PC-9 (cell line): ENCODE measurements at regions of chr13 and their contacts with region 1.

Region 1: GRCh38 chr13:106536244-106537034 is 977 bp upstream of the EFNB2 start:
- DNase-seq: peak; percentile 70 to 79
- H3K4me3 ChIP-seq: peak overlapping the region; percentile 72
- H3K27ac ChIP-seq: peak overlapping the region; percentile 58
- H3K4me1 ChIP-seq: peaks cover 9% of the 10 kb centered on the region
- H3K27me3 ChIP-seq: no peaks in the 10 kb centered on the region
- CTCF ChIP-seq: peak; percentile 97

Region 2: DNA sequence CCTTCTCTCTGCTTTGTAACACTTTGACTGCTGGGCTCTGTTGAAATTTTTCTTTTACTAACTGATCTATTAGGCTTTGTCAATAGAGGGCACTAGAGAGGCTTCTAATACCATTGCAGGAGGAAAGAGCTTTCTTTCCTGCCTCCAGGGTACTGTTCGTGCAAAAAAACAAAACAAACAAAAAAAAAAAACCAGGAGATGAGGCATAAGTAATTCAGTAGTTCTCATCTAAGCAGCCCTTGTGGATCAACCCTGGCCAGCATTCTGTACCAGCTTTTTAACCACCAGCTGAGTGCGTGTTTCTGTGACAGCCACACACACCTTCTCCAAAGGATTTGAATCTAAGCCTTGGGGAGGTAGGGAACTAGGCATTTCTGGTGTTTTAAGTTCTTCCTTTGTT is 1762.7 kb before region 1 on chr13:
- CTCF ChIA-PET with region 1: no interaction called
- POLR2A ChIA-PET with region 1: no interaction called
- intact Hi-C with region 1: loop called (anchors 5 kb)
- DNase-seq: peak in 1 of 2 experiments; percentile 45
- H3K4me3 ChIP-seq: no peak overlapping the region
- H3K27ac ChIP-seq: no peak overlapping the region
- H3K4me1 ChIP-seq: no peaks in the 10 kb centered on the region
- H3K27me3 ChIP-seq: no peaks in the 10 kb centered on the region
- CTCF ChIP-seq: peak; percentile 76

Region 3: GRCh38 chr13:105587786-105588185 is 948.7 kb before region 1 on chr13:
- CTCF ChIA-PET with region 1: no interaction called
- POLR2A ChIA-PET with region 1: no interaction called
- intact Hi-C with region 1: loop called (anchors 5 kb)
- DNase-seq: peak; percentile 48 to 59
- H3K4me3 ChIP-seq: no peak overlapping the region
- H3K27ac ChIP-seq: no peak overlapping the region
- H3K4me1 ChIP-seq: peaks cover 12% of the 10 kb centered on the region
- H3K27me3 ChIP-seq: no peaks in the 10 kb centered on the region
- CTCF ChIP-seq: no peak

Region 4: DNA sequence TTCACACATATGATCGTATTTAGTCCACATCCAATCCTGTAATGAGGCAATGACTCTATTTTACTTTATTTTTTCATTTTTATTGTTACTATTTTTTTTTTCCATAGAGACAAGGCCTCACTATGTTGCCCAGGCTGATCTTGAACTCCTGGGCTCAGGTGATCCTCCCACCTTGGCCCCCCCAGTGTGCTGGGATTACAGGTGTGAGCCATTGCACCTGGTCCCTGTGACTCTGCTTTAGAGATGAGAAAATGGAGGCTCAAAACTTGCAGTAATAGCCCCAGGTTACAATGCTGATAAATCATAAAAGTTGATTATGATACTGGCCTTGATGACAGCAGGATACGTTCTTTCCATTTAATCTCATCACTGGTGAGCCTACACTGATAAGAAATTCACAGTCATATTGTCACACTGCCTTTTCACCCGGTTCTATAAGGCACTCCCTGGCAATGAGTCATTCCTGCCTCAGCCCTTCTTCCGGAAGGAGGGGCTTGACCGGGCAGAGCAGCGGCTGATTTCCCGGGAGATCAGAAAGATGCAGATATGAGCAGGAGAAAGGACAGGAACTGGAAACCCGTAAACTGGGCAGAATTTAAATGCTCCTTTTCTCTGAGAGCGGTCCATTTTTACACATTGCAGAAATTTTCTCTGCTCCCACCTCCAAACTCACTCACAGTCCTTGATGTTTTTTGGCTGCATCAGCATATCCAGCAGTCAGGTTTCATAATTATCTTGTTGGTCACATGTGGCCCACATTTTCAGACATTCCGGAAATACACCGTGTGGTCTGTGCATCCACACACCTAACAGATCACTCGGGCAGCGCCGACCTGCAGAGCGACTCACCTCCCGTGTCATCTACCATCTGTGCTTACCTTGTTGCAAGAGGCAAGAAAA is 617.3 kb before region 1 on chr13:
- CTCF ChIA-PET with region 1: no interaction called
- POLR2A ChIA-PET with region 1: no interaction called
- intact Hi-C with region 1: loop called (anchors 1 kb)
- DNase-seq: peak; percentile 79 to 98
- H3K4me3 ChIP-seq: peak overlapping the region; percentile 47
- H3K27ac ChIP-seq: peak overlapping the region; percentile 99
- H3K4me1 ChIP-seq: peaks cover 40% of the 10 kb centered on the region
- H3K27me3 ChIP-seq: no peaks in the 10 kb centered on the region
- CTCF ChIP-seq: no peak

Region 5: DNA sequence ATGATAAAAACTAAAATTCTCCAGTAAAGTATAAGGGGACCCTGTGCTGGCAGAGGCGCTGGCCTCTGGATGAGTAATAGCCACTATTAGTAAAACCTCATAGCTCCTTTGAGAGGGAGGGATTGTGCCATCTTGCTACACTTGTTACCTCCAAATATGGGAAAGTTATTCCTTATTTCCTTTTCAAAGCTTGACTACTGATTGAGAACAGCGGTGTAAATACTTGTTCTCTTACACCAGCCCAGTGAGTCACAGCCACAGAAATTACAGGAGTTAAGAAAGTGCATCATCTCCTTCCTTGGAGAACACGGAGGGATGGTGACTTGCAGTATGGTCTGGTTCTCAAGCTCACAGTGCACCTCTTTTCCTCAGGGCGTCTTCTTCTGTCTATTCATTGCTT is 380.0 kb before region 1 on chr13:
- CTCF ChIA-PET with region 1: no interaction called
- POLR2A ChIA-PET with region 1: no interaction called
- intact Hi-C with region 1: loop called (anchors 1 kb)
- DNase-seq: peak; percentile 52 to 99
- H3K4me3 ChIP-seq: 0 out of 2 replicates have a peak overlapping the region, but pooled peaks have one; percentile 1
- H3K27ac ChIP-seq: peak overlapping the region; percentile 96
- H3K4me1 ChIP-seq: peaks cover 43% of the 10 kb centered on the region
- H3K27me3 ChIP-seq: no peaks in the 10 kb centered on the region
- CTCF ChIP-seq: no peak

Region 6: GRCh38 chr13:106555631-106556328 is 19.3 kb after region 1 on chr13:
- CTCF ChIA-PET with region 1: no interaction called
- POLR2A ChIA-PET with region 1: no interaction called
- intact Hi-C with region 1: no loop called
- DNase-seq: no peak
- H3K4me3 ChIP-seq: no peak overlapping the region
- H3K27ac ChIP-seq: no peak overlapping the region
- H3K4me1 ChIP-seq: no peaks in the 10 kb centered on the region
- H3K27me3 ChIP-seq: no peaks in the 10 kb centered on the region
- CTCF ChIP-seq: no peak

Region 7: GRCh38 chr13:106567474-106568298 is 31.2 kb after region 1 on chr13 and contains the start of gene ARGLU1:
- CTCF ChIA-PET with region 1: no interaction called
- POLR2A ChIA-PET with region 1: no interaction called
- intact Hi-C with region 1: no loop called
- DNase-seq: peak; percentile 85 to 93
- H3K4me3 ChIP-seq: peak within 1 kb of the TSS; percentile 69
- H3K27ac ChIP-seq: peak within 1 kb of the TSS; percentile 60
- H3K4me1 ChIP-seq: peaks cover 31% of the 10 kb centered on the region
- H3K27me3 ChIP-seq: no peaks in the 10 kb centered on the region
- CTCF ChIP-seq: no peak
- total RNA-seq, gene ARGLU1: 89.2 and 90.8 TPM in 2 replicates

Region 8: GRCh38 chr13:106612688-106613087 is 76.2 kb after region 1 on chr13:
- CTCF ChIA-PET with region 1: no interaction called
- POLR2A ChIA-PET with region 1: no interaction called
- intact Hi-C with region 1: no loop called
- DNase-seq: no peak
- H3K4me3 ChIP-seq: no peak overlapping the region
- H3K27ac ChIP-seq: no peak overlapping the region
- H3K4me1 ChIP-seq: no peaks in the 10 kb centered on the region
- H3K27me3 ChIP-seq: no peaks in the 10 kb centered on the region
- CTCF ChIP-seq: no peak

Region 9: DNA sequence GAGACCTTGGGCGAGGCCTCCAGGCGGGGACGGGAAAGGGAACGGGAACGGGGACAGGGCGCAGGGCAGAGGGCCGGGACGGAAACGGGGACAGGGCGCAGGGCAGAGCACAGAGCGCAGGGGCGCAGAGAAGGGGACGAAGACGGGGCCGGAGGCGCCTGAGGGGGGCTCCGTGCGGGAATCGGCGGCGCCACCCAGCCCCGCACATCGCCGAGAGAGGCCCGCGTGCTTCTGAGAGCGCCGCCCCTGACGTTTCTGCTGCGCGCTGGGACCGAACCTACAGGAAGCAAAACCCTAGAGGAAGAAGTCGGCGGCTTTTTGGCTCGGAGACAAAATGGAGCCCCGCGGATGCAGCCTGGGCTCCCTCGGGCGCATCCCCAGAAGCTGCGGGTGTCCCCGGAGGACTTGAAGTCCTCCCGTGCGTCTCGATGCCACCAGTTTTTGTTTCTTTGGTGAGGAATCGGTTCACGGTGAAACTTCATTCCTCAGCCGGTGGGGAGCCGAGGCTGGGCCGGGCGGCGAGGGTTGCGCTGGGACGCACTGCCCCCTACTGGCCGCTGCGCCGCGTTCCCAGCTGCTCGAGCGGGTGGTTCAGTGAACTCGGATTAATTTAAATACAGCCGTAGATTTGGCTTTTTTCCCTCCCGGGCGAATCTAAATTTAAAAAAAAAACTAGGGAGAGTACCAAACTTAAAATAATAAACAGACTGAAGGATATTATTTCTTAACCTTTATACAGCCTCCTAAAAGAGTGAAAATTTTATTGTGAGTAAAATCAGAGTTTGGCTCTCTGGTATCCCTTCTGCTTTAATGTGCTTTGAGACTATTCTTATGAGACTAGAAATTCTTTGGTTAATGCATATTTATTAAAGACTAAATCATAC is 381.5 kb after region 1 on chr13:
- CTCF ChIA-PET with region 1: interaction called, 4 read pairs
- POLR2A ChIA-PET with region 1: no interaction called
- intact Hi-C with region 1: loop called (anchors 1 kb)
- DNase-seq: peak; percentile 59 to 85
- H3K4me3 ChIP-seq: peak overlapping the region; percentile 76
- H3K27ac ChIP-seq: peak overlapping the region; percentile 60
- H3K4me1 ChIP-seq: peaks cover 14% of the 10 kb centered on the region
- H3K27me3 ChIP-seq: no peaks in the 10 kb centered on the region
- CTCF ChIP-seq: peak; percentile 97